ENCODE measurements at regions of chr15 and their contacts with region 1.

Region 1: DNA sequence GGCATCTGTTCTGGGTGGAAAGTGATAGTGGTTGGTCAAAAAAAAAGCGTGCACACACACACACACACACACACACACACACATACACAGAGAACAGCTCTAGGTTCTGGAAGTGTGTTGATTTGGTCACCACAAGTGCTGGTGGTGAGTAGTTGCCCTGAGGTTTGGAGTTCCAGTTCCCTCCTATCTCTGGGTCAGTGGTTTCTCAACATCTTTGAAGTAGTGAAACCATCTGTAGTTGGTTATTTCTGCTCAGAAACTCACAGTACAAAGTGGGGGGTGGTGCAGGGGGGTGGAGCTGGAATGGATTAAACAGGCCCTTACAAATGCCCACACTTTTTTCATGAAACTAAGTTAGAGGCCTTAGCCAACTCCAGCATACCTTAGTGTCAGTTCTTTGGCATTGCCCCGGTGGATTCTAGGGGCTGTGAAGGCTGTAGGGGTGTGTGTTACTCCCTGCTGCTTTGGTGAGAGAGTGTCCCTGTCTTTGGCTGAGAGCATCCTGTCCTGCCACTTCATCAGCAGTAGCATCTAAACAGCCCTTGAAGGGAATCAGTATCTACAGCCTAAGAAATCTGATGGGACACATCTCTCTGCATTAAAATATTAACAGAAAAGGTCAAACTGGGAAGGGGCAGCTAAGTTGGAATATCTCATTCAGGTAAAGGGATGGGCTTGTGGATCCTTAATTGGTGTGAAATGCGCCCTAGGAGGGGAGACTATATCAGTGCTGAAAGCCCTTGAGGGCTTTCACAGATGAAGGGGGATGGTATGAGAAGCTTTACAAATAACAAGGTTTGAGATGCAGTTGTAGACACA is 20.6 kb downstream of the SMAD3 start:
- DNase-seq: peak; percentile 49
- H3K4me3 Mint-ChIP-seq: peak overlapping the region; percentile 41
- H3K27ac Mint-ChIP-seq: peak overlapping the region; percentile 96
- H3K4me1 Mint-ChIP-seq: peaks cover 100% of the 10 kb centered on the region
- H3K27me3 Mint-ChIP-seq: no peaks in the 10 kb centered on the region

Region 2: DNA sequence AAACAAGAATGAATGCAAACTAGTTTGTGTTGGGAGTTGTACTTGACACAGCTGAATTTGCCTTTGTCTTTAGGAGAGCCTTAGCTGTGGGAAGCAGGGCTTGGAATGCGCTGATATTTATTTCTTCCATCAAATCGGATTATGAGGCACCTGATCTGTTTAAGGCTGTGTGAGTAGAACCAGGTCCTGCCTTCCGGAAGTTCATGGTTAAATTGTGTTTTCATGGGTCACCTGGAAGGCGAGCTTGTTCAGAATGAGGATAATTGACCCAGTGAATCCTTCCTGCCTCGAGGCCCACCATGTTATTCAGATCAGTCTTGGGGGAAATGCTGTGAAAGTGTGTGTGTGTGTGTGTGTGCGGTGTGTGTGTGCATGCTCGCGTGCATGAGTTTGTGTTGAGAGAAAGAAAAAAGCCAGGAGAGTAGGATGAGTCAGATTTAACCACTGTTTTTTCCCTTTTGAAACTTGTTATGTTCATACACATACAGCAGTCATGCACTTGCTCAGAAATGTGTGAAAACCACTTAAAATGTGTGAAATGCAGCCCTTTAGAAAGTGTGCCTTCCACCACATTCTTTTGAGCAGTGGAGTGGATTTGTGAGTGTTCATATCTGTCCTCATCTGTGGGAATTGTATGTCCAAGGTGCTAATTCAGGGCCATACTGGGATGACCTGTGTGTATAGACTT is 16.0 kb after region 1 on chr15:
- CTCF ChIA-PET with region 1: interaction called, 10 read pairs
- DNase-seq: peak; percentile 69
- H3K4me3 Mint-ChIP-seq: no peak overlapping the region
- H3K27ac Mint-ChIP-seq: no peak overlapping the region
- H3K4me1 Mint-ChIP-seq: peaks cover 32% of the 10 kb centered on the region
- H3K27me3 Mint-ChIP-seq: no peaks in the 10 kb centered on the region

Region 3: GRCh38 chr15:67150028-67150860 is 64.2 kb after region 1 on chr15:
- CTCF ChIA-PET with region 1: no interaction called
- DNase-seq: peak; percentile 53
- H3K4me3 Mint-ChIP-seq: peak overlapping the region; percentile 24
- H3K27ac Mint-ChIP-seq: peak overlapping the region; percentile 74
- H3K4me1 Mint-ChIP-seq: peaks cover 76% of the 10 kb centered on the region
- H3K27me3 Mint-ChIP-seq: no peaks in the 10 kb centered on the region

Measured in activated naive CD4-positive, alpha-beta T cell treated with anti-CD3 and anti-CD28 coated beads, Interleukin-2, amount 10 ng/mL, durations not matched to agents 7 days and 5 days (primary cell).